Lower leg skin (tissue), 4 donors: ENCODE measurements at regions of chr12 and their contacts with region 1.

Region 1: DNA sequence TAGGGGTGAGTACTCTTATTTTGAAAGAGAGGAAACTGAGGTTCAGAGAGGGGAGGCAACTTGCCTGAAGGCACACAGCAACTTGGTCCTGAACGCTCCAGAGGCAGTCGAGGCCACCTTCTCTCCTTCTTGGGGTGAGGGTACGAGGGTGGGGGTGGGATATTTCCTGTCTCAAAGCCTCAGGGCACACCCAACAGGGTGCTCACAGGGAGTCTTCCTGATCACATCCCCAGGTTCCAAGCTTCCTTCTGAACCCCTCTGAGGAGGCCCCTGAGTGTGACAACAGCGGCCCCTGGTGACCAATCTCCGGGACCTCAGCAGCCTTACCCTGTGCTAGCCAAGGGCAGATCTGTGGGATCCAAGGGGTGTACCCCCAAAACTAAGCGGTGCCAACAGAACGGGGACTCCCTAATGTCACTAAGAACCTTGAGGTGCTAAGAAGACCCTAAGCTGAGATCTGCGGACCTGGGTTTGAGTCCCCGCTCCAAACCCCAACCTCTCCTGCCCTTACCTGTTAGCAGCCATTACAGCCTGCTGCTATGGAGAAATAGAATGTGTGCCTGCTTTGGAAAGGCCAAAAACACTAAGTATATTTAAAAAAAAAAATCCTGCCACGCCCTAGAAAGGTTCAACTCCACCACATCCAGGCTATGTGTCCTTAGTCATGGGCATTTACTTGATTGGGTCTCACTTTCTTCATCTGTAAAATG is 57.9 kb downstream of the TRPV4 start:
- DNase-seq: peak; percentile 66 to 93
- H3K4me3 ChIP-seq: no peak overlapping the region
- CTCF ChIP-seq: peak in 1 of 3 donors; percentile 70
- POLR2A ChIP-seq: no peak

Region 2: GRCh38 chr12:109597795-109598427 is 177.4 kb before region 1 on chr12:
- intact Hi-C with region 1: loop called (anchors 2 kb)
- DNase-seq: peak; percentile 75 to 97
- H3K4me3 ChIP-seq: no peak overlapping the region
- CTCF ChIP-seq: peak in 1 of 3 donors; percentile 88
- POLR2A ChIP-seq: no peak